Activated naive CD4-positive, alpha-beta T cell treated with anti-CD3 and anti-CD28 coated beads for 36 hours (primary cell): ENCODE measurements at regions of chr14 and their contacts with region 1.

Region 1: GRCh38 chr14:22986508-22987054 is 4.2 kb upstream of the AJUBA start:
- DNase-seq: peak; percentile 97
- H3K4me3 Mint-ChIP-seq: no peak overlapping the region
- H3K27ac Mint-ChIP-seq: no peak overlapping the region
- H3K4me1 Mint-ChIP-seq: no peaks in the 10 kb centered on the region
- H3K27me3 Mint-ChIP-seq: no peaks in the 10 kb centered on the region

Region 2: GRCh38 chr14:22872033-22872832 is 114.3 kb before region 1 on chr14:
- CTCF ChIA-PET with region 1: interaction called, 8 read pairs
- intact Hi-C with region 1: loop called (anchors 1 kb)
- DNase-seq: peak; percentile 87
- H3K4me3 Mint-ChIP-seq: peak overlapping the region; percentile 91
- H3K27ac Mint-ChIP-seq: peak overlapping the region; percentile 100
- H3K4me1 Mint-ChIP-seq: peaks cover 29% of the 10 kb centered on the region
- H3K27me3 Mint-ChIP-seq: no peaks in the 10 kb centered on the region

Region 3: DNA sequence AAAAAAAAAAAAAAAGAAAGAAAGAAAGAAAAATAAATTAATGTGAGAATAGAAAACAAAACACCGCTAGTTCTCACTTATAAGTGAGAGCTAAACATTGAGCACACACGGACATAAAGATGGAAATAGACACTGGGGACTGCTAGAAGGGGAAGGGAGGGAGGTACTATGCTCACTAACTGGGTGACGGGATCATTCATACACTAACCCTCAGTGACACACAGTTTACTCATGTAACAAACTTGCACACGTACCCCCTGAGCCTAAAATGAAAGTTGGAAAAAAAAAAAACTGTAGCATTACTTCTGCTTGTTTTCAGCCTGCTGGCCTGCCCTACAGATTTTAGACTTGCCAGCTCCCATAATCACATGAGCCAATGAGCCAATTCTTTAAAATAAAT is 46.9 kb before region 1 on chr14:
- CTCF ChIA-PET with region 1: interaction called, 13 read pairs
- intact Hi-C with region 1: no loop called
- DNase-seq: no peak
- H3K4me3 Mint-ChIP-seq: no peak overlapping the region
- H3K27ac Mint-ChIP-seq: no peak overlapping the region
- H3K4me1 Mint-ChIP-seq: no peaks in the 10 kb centered on the region
- H3K27me3 Mint-ChIP-seq: no peaks in the 10 kb centered on the region

Region 4: DNA sequence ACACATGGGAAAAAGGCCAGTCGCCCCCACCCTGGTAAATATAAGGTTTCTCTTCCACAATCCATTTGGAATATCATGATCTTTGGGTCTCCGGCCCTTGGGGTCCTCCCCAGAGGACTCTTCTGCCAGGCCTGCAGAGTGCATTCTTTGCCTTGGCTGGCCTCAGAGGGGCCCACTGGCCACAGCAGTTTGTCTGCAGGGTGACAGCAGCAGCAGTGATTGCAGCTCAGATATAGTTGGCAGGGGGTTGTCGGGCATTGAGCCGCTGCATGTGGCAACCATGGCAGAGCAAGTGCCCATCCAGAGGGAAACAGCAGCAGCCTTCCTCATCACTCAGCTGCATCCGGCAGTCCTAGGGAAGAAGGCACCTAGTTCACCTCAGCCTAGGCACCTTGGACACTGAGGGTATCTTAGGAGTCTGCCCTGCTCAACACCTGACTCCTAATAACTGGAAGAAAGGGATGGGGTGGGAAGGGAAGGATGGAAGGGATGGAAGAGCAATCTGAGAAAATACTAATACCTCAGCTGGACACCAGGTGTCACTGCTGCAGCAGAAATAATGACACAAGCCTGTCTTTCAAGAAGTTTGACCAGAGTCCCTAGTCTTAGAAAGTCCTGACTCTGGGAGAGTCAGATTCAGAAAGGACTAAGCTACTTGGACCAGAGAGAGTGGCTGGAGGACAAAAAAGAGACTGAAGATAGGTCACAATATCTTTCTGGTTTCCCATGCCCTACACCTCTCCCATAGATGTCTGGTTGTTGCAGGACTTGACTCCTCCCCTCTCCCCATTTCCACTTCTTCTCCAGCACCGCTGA is 13.2 kb before region 1 on chr14:
- CTCF ChIA-PET with region 1: interaction called, 206 read pairs
- intact Hi-C with region 1: loop called (anchors 1 kb)
- DNase-seq: peak; percentile 64
- H3K4me3 Mint-ChIP-seq: no peak overlapping the region
- H3K27ac Mint-ChIP-seq: no peak overlapping the region
- H3K4me1 Mint-ChIP-seq: no peaks in the 10 kb centered on the region
- H3K27me3 Mint-ChIP-seq: no peaks in the 10 kb centered on the region

Region 5: GRCh38 chr14:23025151-23025814 is 38.7 kb after region 1 on chr14:
- CTCF ChIA-PET with region 1: interaction called, 24 read pairs
- intact Hi-C with region 1: no loop called
- DNase-seq: peak; percentile 55
- H3K4me3 Mint-ChIP-seq: peak overlapping the region; percentile 16
- H3K27ac Mint-ChIP-seq: peak overlapping the region; percentile 85
- H3K4me1 Mint-ChIP-seq: peaks cover 73% of the 10 kb centered on the region
- H3K27me3 Mint-ChIP-seq: no peaks in the 10 kb centered on the region

Region 6: GRCh38 chr14:23057757-23058653 is 71.4 kb after region 1 on chr14:
- CTCF ChIA-PET with region 1: interaction called, 713 read pairs
- intact Hi-C with region 1: loop called (anchors 1 kb)
- DNase-seq: peak; percentile 92
- H3K4me3 Mint-ChIP-seq: peak overlapping the region; percentile 80
- H3K27ac Mint-ChIP-seq: no peak overlapping the region
- H3K4me1 Mint-ChIP-seq: peaks cover 16% of the 10 kb centered on the region
- H3K27me3 Mint-ChIP-seq: peaks cover 5% of the 10 kb centered on the region

Region 7: GRCh38 chr14:23186913-23187654 is 200.5 kb after region 1 on chr14:
- CTCF ChIA-PET with region 1: interaction called, 3 read pairs
- intact Hi-C with region 1: loop called (anchors 2 kb)
- DNase-seq: peak; percentile 55
- H3K4me3 Mint-ChIP-seq: no peak overlapping the region
- H3K27ac Mint-ChIP-seq: no peak overlapping the region
- H3K4me1 Mint-ChIP-seq: no peaks in the 10 kb centered on the region
- H3K27me3 Mint-ChIP-seq: no peaks in the 10 kb centered on the region